ENCODE measurements at regions of chr5 and their contacts with region 1.

Region 1: GRCh38 chr5:135466178-135467050 is 14.3 kb upstream of the TIFAB start:
- DNase-seq: peak; percentile 91
- H3K4me3 ChIP-seq: peak overlapping the region in 1 of 8 donors; percentile 52
- H3K27ac ChIP-seq: no peak overlapping the region
- H3K4me1 ChIP-seq: peaks cover 5 to 24% (median 11%) of the 10 kb centered on the region in 6 donors
- H3K27me3 ChIP-seq: peaks cover 0 to 78% (median 26%) of the 10 kb centered on the region in 7 donors
- CTCF ChIP-seq: peak; percentile 26 to 86 (median 71)
- POLR2A ChIP-seq: no peak

Region 2: DNA sequence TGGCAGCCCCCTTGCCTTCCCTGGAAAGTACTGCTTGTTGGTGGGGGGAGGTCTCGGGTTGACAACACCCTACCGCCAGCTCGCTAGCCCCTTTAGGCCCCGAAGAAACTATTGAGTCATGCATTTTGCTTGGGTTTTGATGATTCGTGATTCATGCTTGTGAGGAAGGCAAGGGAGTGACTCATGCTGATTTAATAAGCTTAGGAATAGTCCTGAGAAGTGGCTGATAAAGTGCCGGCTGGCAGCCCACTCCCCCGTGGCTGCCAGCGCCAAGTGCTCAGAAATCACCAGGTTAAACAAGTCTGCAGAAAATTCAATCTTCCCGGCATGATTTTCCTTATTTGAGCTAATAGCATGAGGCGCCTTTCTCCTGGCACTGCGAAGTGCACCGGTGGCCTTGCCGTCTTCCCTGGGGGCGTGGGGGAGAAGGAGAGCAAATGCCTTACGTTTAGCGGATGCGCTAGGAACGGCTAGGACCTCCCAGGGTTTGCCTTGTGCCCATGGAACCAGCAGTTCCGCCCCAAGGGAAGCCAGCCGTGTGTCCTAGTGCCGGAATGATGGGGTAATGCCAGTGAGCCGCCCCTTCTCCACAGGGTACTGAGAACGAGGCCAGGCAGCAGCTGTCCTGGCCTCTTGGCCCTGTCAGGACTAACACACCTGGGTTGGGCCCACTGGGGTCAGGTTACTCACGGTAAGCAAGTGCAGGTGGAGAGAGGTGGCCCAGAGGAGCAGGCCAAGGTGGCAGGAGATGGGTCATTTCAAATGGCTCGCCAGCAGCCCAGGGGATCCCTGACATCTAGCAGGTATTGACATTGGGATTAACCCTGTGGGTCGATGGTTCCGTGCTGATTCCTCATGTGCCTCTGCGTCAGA is 219.3 kb before region 1 on chr5:
- intact Hi-C with region 1: no loop called
- DNase-seq: peak; percentile 48
- H3K4me3 ChIP-seq: no peak overlapping the region
- H3K27ac ChIP-seq: no peak overlapping the region
- H3K4me1 ChIP-seq: peaks cover 0 to 11% (median 0%) of the 10 kb centered on the region in 6 donors
- H3K27me3 ChIP-seq: no peaks in the 10 kb centered on the region
- CTCF ChIP-seq: no peak
- POLR2A ChIP-seq: no peak

Region 3: GRCh38 chr5:135551593-135552447 is 85.4 kb after region 1 on chr5:
- intact Hi-C with region 1: loop called (anchors 5 kb)
- DNase-seq: no peak
- H3K4me3 ChIP-seq: no peak overlapping the region
- H3K27ac ChIP-seq: no peak overlapping the region
- H3K4me1 ChIP-seq: peaks cover 0 to 4% (median 0%) of the 10 kb centered on the region in 6 donors
- H3K27me3 ChIP-seq: peaks cover 0 to 85% (median 12%) of the 10 kb centered on the region in 7 donors
- CTCF ChIP-seq: peak; percentile 39 to 79 (median 74)
- POLR2A ChIP-seq: no peak

Measured in spleen (tissue), 13 donors.